AG04449 (cell line): ENCODE measurements at regions of chr19 and their contacts with region 1.

Region 1: GRCh38 chr19:48965040-48965805 is at the start of gene FTL:
- DNase-seq: peak; percentile 64
- H3K4me3 ChIP-seq: peak within 1 kb of the TSS; percentile 99
- CTCF ChIP-seq: no peak

Region 2: DNA sequence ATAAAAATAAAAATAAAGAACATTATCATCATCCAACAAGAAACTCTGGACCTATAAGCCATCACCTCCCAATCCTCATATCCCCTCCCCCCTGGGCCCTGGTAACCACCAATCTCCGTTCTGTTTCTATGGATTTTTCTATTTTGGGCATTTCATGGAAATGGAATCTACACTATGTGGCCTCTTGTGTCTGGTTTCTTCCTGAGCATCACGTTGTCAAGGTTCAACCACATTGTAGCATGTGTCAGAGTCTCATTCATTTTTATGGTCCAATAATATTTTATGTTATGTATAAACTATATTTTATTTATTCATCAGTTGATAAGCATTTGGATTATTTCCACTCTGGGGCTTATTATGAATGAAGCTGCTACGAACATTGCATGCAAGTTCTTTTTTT is 386.3 kb before region 1 on chr19:
- CTCF ChIA-PET with region 1: no interaction called
- POLR2A ChIA-PET with region 1: no interaction called
- DNase-seq: no peak
- H3K4me3 ChIP-seq: no peak overlapping the region
- CTCF ChIP-seq: no peak

Region 3: DNA sequence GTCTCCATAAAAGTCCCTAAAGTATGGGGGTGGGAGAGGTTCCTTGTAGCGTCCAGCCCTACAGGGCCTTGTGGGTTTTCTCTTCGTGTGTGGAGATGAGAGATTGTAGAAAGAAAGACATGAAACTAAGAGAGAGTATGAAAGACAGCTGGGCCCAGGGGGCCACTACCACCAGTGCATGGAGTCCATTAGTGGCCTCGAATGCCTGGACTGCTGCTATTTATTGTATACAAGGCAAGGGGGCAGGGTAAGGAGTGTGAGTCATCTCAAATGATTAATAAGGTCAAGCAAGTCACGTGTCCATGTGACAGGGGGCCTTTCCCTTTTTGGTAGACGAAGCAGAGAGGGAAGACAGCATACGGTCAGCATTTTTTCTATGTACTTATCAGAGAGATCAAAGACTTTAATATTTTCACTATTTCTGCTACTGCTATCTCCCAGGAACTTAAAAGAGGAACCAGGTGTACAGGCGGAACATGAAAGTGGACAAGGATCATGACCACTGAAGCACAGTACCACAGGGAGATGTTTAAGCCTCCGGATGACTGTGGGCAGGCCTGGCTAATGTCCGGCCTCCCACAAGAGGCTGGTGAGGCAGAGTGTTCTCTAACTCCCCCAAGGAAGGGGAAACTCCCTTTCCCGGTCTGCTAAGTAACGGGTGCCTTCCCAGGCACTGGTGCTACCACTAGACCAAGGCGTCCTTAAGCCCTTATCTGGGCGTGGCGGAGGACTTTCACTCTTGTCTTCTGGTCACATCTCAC is 184.4 kb before region 1 on chr19:
- CTCF ChIA-PET with region 1: interaction called, 141 read pairs
- POLR2A ChIA-PET with region 1: interaction called, 3 read pairs
- DNase-seq: no peak
- H3K4me3 ChIP-seq: no peak overlapping the region
- CTCF ChIP-seq: no peak

Region 4: GRCh38 chr19:48795055-48795684 is 170.1 kb before region 1 on chr19:
- CTCF ChIA-PET with region 1: interaction called, 141 read pairs
- POLR2A ChIA-PET with region 1: interaction called, 7 read pairs
- DNase-seq: peak; percentile 65
- H3K4me3 ChIP-seq: peak overlapping the region; percentile 70
- CTCF ChIP-seq: peak; percentile 93

Region 5: DNA sequence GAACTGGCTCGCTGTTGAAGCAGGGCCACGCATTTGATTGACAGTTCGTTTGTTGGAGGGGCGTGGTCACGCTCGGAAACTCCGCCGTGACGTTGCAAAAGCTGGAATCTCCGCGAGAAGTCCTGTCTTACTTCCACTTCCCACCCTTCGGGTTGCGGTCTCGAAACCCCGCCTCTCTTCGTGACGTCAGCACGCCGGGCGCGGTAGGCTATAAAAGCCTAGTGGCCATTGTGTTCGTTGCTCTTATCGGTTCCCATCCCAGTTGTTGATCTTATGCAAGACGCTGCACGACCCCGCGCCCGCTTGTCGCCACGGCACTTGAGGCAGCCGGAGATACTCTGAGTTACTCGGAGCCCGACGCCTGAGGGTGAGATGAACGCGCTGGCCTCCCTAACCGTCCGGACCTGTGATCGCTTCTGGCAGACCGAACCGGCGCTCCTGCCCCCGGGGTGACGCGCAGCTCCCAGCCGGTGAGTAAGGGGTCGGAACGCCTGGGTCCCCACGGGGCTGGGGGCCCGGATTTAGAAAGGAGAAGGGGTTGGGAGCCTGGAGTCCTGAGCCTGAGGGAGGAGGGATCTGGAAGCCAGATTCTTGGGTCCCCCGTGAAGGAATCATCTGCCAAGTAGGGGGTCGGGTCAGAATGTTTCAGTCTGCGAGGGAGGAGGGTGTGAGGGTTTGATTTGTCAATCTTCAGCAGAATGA is 92.9 kb before region 1 on chr19 and contains the start of gene PPP1R15A:
- CTCF ChIA-PET with region 1: interaction called, 24 read pairs
- POLR2A ChIA-PET with region 1: interaction called, 119 read pairs
- DNase-seq: peak; percentile 88
- H3K4me3 ChIP-seq: peak within 1 kb of the TSS; percentile 100
- CTCF ChIP-seq: no peak

Region 6: GRCh38 chr19:48899781-48900476 is 65.3 kb before region 1 on chr19 and contains the start of gene NUCB1:
- CTCF ChIA-PET with region 1: interaction called, 8 read pairs
- POLR2A ChIA-PET with region 1: interaction called, 23 read pairs
- DNase-seq: peak; percentile 83
- H3K4me3 ChIP-seq: peak within 1 kb of the TSS; percentile 97
- CTCF ChIP-seq: peak; percentile 17

Region 7: DNA sequence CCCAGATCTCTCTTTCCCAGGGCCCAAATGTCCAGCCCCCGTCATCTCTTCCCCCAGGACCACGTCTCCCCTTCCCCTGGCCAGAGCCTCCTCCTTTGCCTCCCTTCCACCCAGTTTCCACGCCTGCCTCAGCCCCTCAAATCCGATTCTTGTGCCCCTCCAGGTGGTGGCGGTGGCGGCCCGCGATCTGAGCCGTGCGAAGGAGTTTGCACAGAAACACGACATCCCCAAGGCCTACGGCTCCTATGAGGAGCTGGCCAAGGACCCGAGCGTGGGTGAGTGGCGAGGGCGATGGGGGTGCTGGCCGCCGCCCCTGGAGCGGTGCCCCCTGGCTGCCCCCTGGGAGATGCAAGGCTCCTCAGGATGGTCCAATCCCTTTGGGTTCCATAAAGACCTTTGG is 30.4 kb before region 1 on chr19:
- CTCF ChIA-PET with region 1: no interaction called
- POLR2A ChIA-PET with region 1: no interaction called
- DNase-seq: no peak
- H3K4me3 ChIP-seq: no peak overlapping the region
- CTCF ChIP-seq: no peak

Region 8: DNA sequence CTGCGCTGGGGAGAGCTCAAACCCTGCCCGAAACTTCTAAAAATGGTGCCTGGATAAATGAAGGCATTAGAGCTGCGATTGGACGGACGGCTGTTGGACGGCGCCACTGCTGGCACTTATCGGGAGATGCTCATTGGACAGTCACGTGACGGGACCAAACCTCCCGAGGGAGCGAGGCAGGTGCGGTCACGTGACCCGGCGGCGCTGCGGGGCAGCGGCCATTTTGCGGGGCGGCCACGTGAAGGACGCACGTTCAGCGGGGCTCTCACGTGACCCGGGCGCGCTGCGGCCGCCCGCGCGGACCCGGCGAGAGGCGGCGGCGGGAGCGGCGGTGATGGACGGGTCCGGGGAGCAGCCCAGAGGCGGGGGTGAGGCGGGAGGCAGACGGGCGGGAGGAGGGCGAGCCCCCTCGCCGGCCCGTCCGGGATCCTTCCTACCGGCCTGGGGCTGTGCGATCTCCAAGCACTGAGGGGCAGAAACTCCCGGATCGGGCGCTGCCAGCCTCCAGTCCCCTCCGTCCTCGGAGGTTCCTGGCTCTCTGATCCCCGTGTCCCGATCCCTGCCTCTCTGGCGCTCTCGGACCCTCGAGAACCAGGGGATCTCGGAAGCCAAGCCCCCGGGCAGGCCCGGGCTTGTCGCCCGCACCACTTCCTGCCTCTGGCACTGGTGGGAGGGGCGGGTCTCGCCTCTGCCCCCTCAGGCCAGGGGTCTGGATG is 10.5 kb before region 1 on chr19 and contains the start of gene BAX:
- CTCF ChIA-PET with region 1: interaction called, 6 read pairs
- POLR2A ChIA-PET with region 1: interaction called, 18 read pairs
- DNase-seq: no peak
- H3K4me3 ChIP-seq: peak within 1 kb of the TSS; percentile 94
- CTCF ChIP-seq: peak; percentile 12

Region 9: GRCh38 chr19:48975947-48976847 is 11.0 kb after region 1 on chr19:
- CTCF ChIA-PET with region 1: interaction called, 25 read pairs
- POLR2A ChIA-PET with region 1: interaction called, 9 read pairs
- DNase-seq: no peak
- H3K4me3 ChIP-seq: no peak overlapping the region
- CTCF ChIP-seq: no peak

Region 10: DNA sequence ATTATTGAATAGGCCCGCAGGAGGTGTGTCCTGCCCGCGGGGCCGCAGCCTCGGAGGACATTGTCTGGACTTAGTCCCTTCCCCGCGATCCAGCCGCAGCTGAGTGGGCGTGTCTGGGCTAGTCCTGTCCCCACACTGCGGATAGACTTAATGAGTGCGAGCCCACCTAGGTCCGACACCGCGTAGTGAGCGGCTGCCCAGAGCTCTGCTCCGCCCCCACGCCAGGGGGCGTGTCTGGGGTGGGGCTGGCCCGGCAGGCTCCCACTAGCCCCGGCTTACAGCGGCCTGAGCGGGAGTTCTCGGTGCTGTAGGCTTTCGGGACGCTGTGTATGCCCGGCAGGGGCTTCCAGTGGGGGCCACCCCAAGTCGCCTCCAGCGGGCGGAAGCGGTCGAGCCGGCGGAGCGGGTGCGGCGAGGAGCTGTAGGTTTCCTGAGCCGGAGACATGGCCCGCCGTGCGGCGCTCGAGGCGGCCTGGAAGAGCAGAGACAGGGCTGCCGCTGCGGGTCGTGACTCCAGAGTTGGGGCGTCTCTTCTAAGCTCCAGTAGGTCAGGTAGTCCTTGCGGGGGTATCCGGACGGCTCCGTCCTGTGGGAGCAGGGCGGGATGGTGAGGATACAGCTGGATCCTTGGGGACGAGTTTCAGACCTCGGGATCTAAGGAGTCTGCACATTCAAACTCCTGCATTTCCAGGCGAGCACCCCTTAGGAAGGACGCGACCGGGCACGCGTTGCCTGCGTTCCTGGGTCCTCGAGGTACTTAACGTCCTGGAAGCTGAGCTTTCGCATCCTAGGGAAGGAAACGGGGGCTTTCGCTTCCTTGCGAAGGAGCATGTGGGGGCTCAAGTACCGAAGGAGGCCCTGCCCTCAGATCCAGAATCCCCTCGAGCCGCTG is 91.0 kb after region 1 on chr19:
- CTCF ChIA-PET with region 1: no interaction called
- POLR2A ChIA-PET with region 1: no interaction called
- DNase-seq: no peak
- H3K4me3 ChIP-seq: peak overlapping the region; percentile 66
- CTCF ChIP-seq: peak; percentile 46